HAP-1 (cell line): ENCODE measurements at regions of chr21 and their contacts with region 1.

Region 1: DNA sequence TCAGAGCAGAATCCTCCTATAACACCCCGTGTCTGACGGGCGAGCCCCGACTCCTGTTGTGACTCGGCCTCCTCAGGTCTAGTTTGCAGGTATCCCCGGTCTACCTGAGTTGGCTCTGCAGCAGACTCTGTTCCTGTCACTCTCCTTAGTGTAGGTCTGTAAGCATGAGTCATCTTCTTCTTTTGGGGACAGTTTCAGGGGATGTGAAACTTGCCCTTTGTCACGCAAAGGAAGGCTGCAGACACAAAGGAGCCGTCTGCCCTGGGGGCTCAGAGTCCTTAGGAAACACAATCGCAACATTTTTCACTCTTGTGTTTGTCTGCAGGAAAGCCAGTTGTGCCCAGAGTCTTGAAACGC is 183.2 kb downstream of the RUNX1 start:
- DNase-seq: peak; percentile 91 to 97
- H3K4me3 ChIP-seq: no peak overlapping the region
- H3K4me1 ChIP-seq: peaks cover 44% of the 10 kb centered on the region
- H3K27me3 ChIP-seq: no peaks in the 10 kb centered on the region

Region 2: GRCh38 chr21:36060159-36060921 is 1194.4 kb after region 1 on chr21 and contains the start of gene SETD4:
- in situ Hi-C with region 1: loop called (anchors 25 kb)
- DNase-seq: peak; percentile 81 to 94
- H3K4me3 ChIP-seq: peak within 1 kb of the TSS; percentile 89
- H3K4me1 ChIP-seq: peaks cover 12% of the 10 kb centered on the region
- H3K27me3 ChIP-seq: no peaks in the 10 kb centered on the region